Activated B cell treated with CpG ODN at 0.5 μM for 24 hours (primary cell): ENCODE measurements at regions of chr1 and their contacts with region 1.

Region 1: DNA sequence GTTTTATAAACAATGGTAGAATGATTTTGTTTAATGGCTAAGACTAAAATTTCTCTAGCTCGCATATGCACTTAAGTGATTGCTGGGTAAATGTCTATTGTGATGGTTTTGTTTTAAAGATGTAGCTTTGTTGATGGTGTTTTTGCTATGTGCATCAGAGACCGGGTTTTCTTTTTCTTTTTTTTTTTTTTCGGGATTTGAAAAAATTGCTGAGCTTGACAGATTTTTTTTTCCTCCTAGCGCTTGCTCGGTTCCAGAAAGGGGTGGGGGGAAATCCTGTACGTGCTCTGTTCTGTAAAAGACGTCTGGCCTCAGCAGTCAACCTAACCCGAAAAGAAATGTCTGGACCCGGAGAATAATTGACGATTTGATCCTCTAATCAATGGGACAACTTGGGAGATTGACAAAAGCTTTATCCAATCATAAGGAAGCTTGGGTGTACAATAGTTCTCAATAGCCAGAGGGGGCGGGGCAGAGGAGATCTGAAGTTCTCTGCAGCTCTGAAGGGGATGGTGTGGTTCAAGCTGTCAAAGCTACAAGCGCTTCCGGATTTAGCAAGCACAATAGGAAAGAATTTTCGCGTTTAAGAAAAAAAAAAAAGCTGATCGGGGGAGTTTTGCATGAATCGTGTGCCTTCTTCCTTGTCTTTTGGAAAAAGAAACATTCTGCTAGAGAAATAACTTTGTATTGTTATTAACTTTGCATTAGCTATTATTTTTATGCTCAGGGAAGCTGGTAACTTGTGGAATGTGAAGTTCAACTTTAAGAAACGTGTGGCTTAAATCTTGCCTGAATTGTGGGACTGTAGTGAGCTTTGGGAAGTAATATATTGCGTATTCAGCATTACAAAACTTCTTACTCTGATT is 4.5 kb upstream of the NFIA start:
- DNase-seq: peak; percentile 38
- ATAC-seq: peak; percentile 62
- H3K4me3 Mint-ChIP-seq: peak overlapping the region; percentile 95
- H3K27ac Mint-ChIP-seq: peak overlapping the region; percentile 90
- H3K4me1 Mint-ChIP-seq: peaks cover 32% of the 10 kb centered on the region
- H3K27me3 Mint-ChIP-seq: peaks cover 33% of the 10 kb centered on the region
- CTCF ChIP-seq: no peak

Region 2: GRCh38 chr1:61017651-61018050 is 60.3 kb before region 1 on chr1:
- CTCF ChIA-PET with region 1: no interaction called
- POLR2A ChIA-PET with region 1: no interaction called
- intact Hi-C with region 1: no loop called
- DNase-seq: no peak
- ATAC-seq: no peak
- H3K4me3 Mint-ChIP-seq: no peak overlapping the region
- H3K27ac Mint-ChIP-seq: no peak overlapping the region
- H3K4me1 Mint-ChIP-seq: no peaks in the 10 kb centered on the region
- H3K27me3 Mint-ChIP-seq: peaks cover 22% of the 10 kb centered on the region
- CTCF ChIP-seq: no peak

Region 3: GRCh38 chr1:61043010-61043820 is 34.7 kb before region 1 on chr1:
- CTCF ChIA-PET with region 1: interaction called, 4 read pairs
- POLR2A ChIA-PET with region 1: no interaction called
- intact Hi-C with region 1: loop called (anchors 5 kb)
- DNase-seq: peak; percentile 66
- ATAC-seq: peak; percentile 80
- H3K4me3 Mint-ChIP-seq: peak overlapping the region; percentile 72
- H3K27ac Mint-ChIP-seq: no peak overlapping the region
- H3K4me1 Mint-ChIP-seq: peaks cover 8% of the 10 kb centered on the region
- H3K27me3 Mint-ChIP-seq: peaks cover 46% of the 10 kb centered on the region
- CTCF ChIP-seq: no peak

Region 4: DNA sequence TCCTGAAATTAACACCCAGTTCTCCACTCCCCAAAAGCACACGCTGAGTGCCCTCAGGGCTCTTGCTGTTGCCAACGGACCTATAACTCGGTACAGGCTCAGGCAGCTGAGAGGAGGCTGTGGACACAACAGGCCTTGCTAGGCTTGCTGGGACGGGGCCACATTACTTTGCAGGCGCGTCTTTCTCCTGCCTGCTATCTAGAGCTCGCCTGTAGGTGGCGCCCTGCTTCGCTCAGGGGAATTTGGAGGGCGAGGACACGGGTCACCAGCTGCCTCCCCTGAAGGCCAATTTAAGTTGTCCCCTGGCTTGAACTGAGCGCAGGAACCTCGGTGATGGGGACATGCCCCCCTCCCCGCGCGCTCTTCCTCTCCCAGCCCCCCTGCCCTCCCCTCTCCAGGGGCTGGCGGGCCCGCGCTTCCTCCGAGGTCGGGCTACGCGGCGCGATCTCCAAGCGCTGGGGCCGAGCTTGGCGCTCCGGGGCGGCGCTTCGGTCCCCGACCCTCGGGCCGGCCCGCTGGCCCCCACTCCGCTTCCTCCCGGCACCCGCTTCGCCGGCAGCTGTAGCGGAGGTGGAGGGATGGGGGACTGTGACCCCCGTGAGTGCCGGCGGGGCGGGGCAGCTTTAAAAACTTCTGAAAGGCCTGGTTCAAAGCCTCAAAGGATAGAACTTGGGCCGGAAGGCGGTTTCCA is 27.9 kb before region 1 on chr1:
- CTCF ChIA-PET with region 1: interaction called, 28 read pairs
- POLR2A ChIA-PET with region 1: interaction called, 29 read pairs
- intact Hi-C with region 1: loop called (anchors 1 kb)
- DNase-seq: peak; percentile 82
- ATAC-seq: peak; percentile 87
- H3K4me3 Mint-ChIP-seq: peak overlapping the region; percentile 82
- H3K27ac Mint-ChIP-seq: no peak overlapping the region
- H3K4me1 Mint-ChIP-seq: peaks cover 29% of the 10 kb centered on the region
- H3K27me3 Mint-ChIP-seq: peaks cover 54% of the 10 kb centered on the region
- CTCF ChIP-seq: peak; percentile 36

Region 5: GRCh38 chr1:61724813-61725694 is 647.1 kb after region 1 on chr1 and contains the start of gene TM2D1:
- CTCF ChIA-PET with region 1: no interaction called
- POLR2A ChIA-PET with region 1: no interaction called
- intact Hi-C with region 1: loop called (anchors 2 kb)
- DNase-seq: peak; percentile 81
- ATAC-seq: peak; percentile 97
- H3K4me3 Mint-ChIP-seq: peak within 1 kb of the TSS; percentile 99
- H3K27ac Mint-ChIP-seq: peak within 1 kb of the TSS; percentile 98
- H3K4me1 Mint-ChIP-seq: peaks cover 20% of the 10 kb centered on the region
- H3K27me3 Mint-ChIP-seq: no peaks in the 10 kb centered on the region
- CTCF ChIP-seq: no peak
- total RNA-seq, gene TM2D1: 33.6 and 41.4 TPM in 2 replicates

Region 6: GRCh38 chr1:61741711-61742619 is 664.1 kb after region 1 on chr1 and contains the start of gene PATJ:
- CTCF ChIA-PET with region 1: no interaction called
- POLR2A ChIA-PET with region 1: no interaction called
- intact Hi-C with region 1: loop called (anchors 5 kb)
- DNase-seq: peak; percentile 64
- ATAC-seq: peak; percentile 91
- H3K4me3 Mint-ChIP-seq: peak within 1 kb of the TSS; percentile 94
- H3K27ac Mint-ChIP-seq: peak within 1 kb of the TSS; percentile 81
- H3K4me1 Mint-ChIP-seq: peaks cover 11% of the 10 kb centered on the region
- H3K27me3 Mint-ChIP-seq: no peaks in the 10 kb centered on the region
- CTCF ChIP-seq: no peak
- total RNA-seq, gene PATJ: 22.5 and 31.2 TPM in 2 replicates